ENCODE measurements at regions of chr1 and their contacts with region 1.

Region 1: DNA sequence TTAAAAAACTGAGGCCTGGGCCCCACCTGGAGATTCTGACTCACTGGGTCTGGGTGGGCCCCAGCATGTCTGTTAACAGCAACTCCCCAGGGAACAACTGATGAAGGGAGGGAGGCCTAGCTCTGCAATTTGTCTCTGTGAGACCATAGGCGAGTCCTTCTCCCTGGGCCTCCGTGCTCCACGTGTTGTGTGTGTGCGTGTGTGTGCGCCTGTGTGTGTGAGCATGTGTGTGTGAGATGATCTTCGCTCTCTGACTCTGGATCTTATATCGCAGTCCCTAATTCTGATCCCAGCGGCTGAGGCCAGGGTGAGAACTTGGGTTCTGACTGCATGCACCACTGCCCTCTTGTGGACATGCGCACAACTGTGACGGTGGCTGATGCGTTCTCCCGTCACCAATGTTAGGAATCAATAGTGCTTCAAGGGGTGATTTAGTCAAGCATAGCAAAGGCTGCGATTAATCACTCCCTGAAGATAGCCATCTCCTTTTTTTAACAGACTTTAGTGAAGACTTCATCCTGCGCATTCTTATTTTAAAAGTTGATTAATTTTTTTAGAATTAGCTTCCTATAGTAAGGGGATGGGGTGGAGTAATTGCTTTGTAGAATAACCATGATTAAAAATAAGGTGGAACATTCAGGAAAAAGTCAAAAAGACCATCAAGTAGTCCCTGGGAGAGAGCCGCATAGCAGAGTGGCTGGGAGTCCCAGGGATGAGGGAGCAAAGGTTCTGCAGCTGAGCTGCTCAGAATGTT is 62.4 kb upstream of the USP24 start:
- DNase-seq: peak; percentile 86
- ATAC-seq: peak; percentile 97
- H3K4me3 Mint-ChIP-seq: no peak overlapping the region
- H3K27ac Mint-ChIP-seq: peak overlapping the region; percentile 37
- H3K4me1 Mint-ChIP-seq: peaks cover 20% of the 10 kb centered on the region
- H3K27me3 Mint-ChIP-seq: peaks cover 7% of the 10 kb centered on the region

Region 2: DNA sequence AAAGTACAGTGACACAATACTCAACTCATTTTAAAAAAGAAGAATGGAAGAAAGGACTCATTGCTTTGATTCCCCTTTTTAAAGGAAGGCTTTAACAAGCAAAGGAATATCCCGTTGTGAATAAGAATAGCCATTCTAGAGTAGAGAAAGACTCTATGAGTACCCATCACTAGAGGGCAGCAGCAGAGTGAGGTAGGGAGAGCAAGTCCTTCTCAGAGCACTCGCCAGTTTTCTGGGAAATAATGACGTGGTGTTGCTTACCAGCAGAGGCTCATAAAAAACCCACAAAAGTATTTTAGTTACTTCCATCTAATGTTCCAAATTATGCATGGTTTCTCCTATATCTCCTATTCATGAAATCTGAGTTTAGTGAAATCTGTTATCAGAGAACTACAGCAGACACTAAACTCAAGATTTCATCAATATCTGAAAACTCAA is 137.0 kb before region 1 on chr1:
- CTCF ChIA-PET with region 1: interaction called, 48 read pairs
- POLR2A ChIA-PET with region 1: no interaction called
- DNase-seq: peak; percentile 88
- ATAC-seq: peak; percentile 94
- H3K4me3 Mint-ChIP-seq: no peak overlapping the region
- H3K27ac Mint-ChIP-seq: peak overlapping the region; percentile 24
- H3K4me1 Mint-ChIP-seq: peaks cover 16% of the 10 kb centered on the region
- H3K27me3 Mint-ChIP-seq: no peaks in the 10 kb centered on the region

Region 3: DNA sequence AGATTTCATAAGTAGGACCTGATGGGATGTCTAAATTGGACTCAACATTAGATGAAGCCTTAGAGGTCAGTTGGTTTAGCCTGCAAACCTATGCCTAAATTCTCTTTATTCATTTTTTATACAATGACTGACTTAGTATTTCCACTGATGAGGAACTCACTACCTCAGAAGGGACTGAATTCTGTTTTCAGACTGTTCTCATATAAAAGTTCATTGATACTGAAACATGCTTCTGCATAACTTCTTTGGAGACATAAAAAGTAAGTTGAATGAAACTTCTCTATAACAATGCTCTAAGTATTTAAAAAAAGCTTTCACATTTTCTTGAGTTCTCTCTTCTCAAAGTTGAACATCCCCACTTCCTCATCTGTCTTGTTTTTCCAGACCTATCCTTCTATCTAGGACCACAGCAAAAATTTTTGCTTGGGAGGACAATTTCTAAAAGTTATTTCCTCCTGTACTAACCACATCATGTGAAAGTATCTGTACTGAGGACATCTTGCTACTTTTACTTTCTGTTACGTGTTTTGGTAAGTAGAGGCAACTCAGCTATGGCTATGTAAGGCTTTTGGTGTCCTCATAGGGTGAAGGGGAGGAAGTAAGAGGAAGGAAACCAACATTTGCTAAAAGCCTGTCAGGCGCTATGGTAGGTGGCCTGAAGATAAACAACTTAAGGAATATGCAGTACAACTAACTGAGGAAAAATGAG is 126.5 kb before region 1 on chr1:
- CTCF ChIA-PET with region 1: interaction called, 21 read pairs
- POLR2A ChIA-PET with region 1: no interaction called
- DNase-seq: peak; percentile 37
- ATAC-seq: peak; percentile 98
- H3K4me3 Mint-ChIP-seq: peak overlapping the region; percentile 60
- H3K27ac Mint-ChIP-seq: peak overlapping the region; percentile 86
- H3K4me1 Mint-ChIP-seq: peaks cover 28% of the 10 kb centered on the region
- H3K27me3 Mint-ChIP-seq: no peaks in the 10 kb centered on the region

Region 4: GRCh38 chr1:55179177-55179835 is 98.2 kb before region 1 on chr1:
- CTCF ChIA-PET with region 1: interaction called, 11 read pairs
- POLR2A ChIA-PET with region 1: no interaction called
- DNase-seq: no peak
- ATAC-seq: no peak
- H3K4me3 Mint-ChIP-seq: no peak overlapping the region
- H3K27ac Mint-ChIP-seq: no peak overlapping the region
- H3K4me1 Mint-ChIP-seq: peaks cover 12% of the 10 kb centered on the region
- H3K27me3 Mint-ChIP-seq: no peaks in the 10 kb centered on the region

Region 5: DNA sequence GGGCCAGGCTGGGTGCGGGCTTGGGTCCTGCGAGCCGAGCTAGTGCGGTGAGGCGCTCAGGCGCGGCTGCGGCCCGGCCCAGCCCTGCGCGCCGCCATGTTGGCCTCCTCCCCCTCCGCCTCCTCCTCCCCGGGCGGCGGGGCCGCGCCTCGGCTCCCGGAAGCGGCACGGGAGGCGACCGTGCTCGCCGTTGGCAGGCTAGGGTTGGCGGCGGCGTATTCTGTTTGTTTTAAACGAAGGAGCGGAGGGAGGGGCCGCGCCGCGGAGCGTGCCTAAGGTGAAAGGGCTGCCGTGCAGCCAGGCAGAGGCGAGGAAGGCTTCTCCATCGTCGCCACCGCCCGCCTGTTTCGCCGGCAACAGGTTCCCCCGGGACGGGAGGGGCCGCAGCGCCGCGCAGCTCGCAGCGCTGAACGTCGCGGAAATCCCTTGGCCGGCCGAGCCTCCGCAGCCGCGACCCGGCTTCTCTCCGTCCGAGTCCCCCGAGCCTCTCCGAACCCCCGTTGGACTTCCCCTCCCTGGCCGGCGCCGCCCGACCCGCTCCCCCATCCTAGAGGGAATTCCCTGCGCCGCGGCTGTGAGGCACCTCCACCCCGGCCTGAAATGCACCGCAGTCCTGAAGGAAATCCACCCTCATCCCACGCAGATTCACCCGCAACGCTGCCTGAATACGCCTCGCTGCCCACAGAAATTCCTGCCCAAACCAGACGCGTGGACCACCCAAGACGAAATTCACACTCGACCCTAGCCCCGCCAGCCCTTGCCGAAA is 62.1 kb before region 1 on chr1 and contains the start of gene USP24:
- CTCF ChIA-PET with region 1: interaction called, 16 read pairs
- POLR2A ChIA-PET with region 1: no interaction called
- DNase-seq: peak; percentile 85
- ATAC-seq: peak; percentile 88
- H3K4me3 Mint-ChIP-seq: peak within 1 kb of the TSS; percentile 95
- H3K27ac Mint-ChIP-seq: peak within 1 kb of the TSS; percentile 98
- H3K4me1 Mint-ChIP-seq: peaks cover 58% of the 10 kb centered on the region
- H3K27me3 Mint-ChIP-seq: no peaks in the 10 kb centered on the region
- total RNA-seq, gene USP24: 36.7 to 44.1 TPM

Measured in activated CD8-positive, alpha-beta T cell treated with anti-CD3 and anti-CD28 coated beads, Interleukin-2, amount 10 ng/mL, durations not matched to agents 7 days and 5 days (primary cell).